CD4-positive, alpha-beta memory T cell (primary cell): ENCODE measurements at regions of chrX and their contacts with region 1.

Region 1: GRCh38 chrX:81195712-81196111 is 6.0 kb downstream of the HMGN5 start:
- DNase-seq: peak; percentile 44 to 51 (median 49)
- H3K4me3 ChIP-seq: no peak overlapping the region
- H3K4me3 Mint-ChIP-seq: no peak overlapping the region
- H3K27ac ChIP-seq: no peak overlapping the region
- H3K27ac Mint-ChIP-seq: peak overlapping the region in 1 of 7 donors; percentile 38
- H3K4me1 ChIP-seq: no peaks in the 10 kb centered on the region
- H3K4me1 Mint-ChIP-seq: peaks cover 0 to 17% (median 7%) of the 10 kb centered on the region in 4 donors
- H3K27me3 ChIP-seq: no peaks in the 10 kb centered on the region
- H3K27me3 Mint-ChIP-seq: no peaks in the 10 kb centered on the region

Region 2: DNA sequence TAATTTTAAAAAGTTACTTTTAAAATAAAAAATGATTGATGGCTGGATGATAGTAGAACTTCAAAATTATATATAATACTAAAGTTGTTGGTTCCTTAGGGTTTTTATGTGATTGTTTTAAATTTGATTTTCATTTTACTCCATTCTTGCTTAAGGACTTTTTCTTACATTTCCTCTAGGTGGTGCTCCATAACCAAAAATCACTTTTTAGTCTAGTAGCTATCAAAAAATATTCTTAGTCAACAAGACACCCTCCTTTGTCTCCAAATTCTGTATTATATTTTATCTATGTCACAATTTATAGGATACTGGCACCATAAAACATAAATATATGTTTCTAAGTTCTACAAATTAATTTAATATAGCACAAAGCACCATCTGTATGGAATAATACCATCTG is 318.8 kb before region 1 on chrX:
- CTCF ChIA-PET with region 1: no interaction called
- POLR2A ChIA-PET with region 1: no interaction called
- intact Hi-C with region 1: loop called (anchors 2 kb)
- DNase-seq: peak in 4 of 5 donors; percentile 16 to 32 (median 26)
- H3K4me3 ChIP-seq: no peak overlapping the region
- H3K4me3 Mint-ChIP-seq: no peak overlapping the region
- H3K27ac ChIP-seq: no peak overlapping the region
- H3K27ac Mint-ChIP-seq: no peak overlapping the region
- H3K4me1 ChIP-seq: no peaks in the 10 kb centered on the region
- H3K4me1 Mint-ChIP-seq: no peaks in the 10 kb centered on the region
- H3K27me3 ChIP-seq: no peaks in the 10 kb centered on the region
- H3K27me3 Mint-ChIP-seq: no peaks in the 10 kb centered on the region

Region 3: GRCh38 chrX:81377329-81377728 is 181.6 kb after region 1 on chrX:
- CTCF ChIA-PET with region 1: interaction called, 5 read pairs
- POLR2A ChIA-PET with region 1: no interaction called
- intact Hi-C with region 1: loop called (anchors 5 kb)
- DNase-seq: peak in 3 of 5 donors; percentile 1 to 8 (median 2)
- H3K4me3 ChIP-seq: no peak overlapping the region
- H3K4me3 Mint-ChIP-seq: no peak overlapping the region
- H3K27ac ChIP-seq: no peak overlapping the region
- H3K27ac Mint-ChIP-seq: no peak overlapping the region
- H3K4me1 ChIP-seq: no peaks in the 10 kb centered on the region
- H3K4me1 Mint-ChIP-seq: no peaks in the 10 kb centered on the region
- H3K27me3 ChIP-seq: no peaks in the 10 kb centered on the region
- H3K27me3 Mint-ChIP-seq: peaks cover 0 to 5% of the 10 kb centered on the region in 2 donors

Region 4: DNA sequence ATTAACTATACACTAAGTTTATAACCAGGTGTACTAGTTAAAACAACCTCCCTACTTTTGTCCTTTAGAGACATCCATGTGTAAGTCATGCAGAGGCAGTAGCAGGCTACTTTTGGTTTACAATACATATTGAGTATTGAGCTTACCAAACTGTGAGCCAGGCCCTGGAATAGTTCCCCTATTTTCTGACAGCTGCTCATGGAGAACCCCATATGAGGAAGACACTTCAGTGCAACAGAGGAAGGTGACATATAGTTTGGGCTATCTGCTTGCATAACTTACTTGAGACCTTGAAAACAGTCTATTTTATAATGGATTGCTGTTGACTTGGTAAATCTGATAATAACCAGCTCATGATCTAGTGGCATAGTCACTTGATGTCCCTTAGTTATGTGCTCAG is 196.7 kb after region 1 on chrX:
- CTCF ChIA-PET with region 1: no interaction called
- POLR2A ChIA-PET with region 1: no interaction called
- intact Hi-C with region 1: no loop called
- DNase-seq: no peak
- H3K4me3 ChIP-seq: no peak overlapping the region
- H3K4me3 Mint-ChIP-seq: no peak overlapping the region
- H3K27ac ChIP-seq: no peak overlapping the region
- H3K27ac Mint-ChIP-seq: no peak overlapping the region
- H3K4me1 ChIP-seq: no peaks in the 10 kb centered on the region
- H3K4me1 Mint-ChIP-seq: no peaks in the 10 kb centered on the region
- H3K27me3 ChIP-seq: no peaks in the 10 kb centered on the region
- H3K27me3 Mint-ChIP-seq: peaks cover 2 to 3% of the 10 kb centered on the region in 2 donors

Region 5: DNA sequence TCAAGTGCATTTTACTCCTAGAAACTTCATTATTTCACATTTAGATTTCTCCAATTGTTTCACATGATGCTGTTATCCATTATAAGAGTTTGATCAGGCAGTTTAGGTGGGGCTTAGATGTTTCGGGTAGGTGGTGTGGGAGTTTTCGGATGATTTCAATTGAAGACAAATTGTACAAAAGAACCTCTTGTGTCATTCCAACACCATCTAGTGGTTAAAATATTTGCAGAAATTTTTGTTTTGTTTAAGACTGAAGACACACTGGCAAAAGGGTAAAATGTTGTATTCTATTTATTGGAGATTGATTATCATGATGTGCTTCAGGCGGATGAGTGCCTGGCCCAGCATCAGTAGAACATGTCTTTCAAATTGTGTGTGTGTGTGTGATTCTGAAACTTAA is 218.9 kb after region 1 on chrX:
- CTCF ChIA-PET with region 1: no interaction called
- POLR2A ChIA-PET with region 1: no interaction called
- intact Hi-C with region 1: no loop called
- DNase-seq: no peak
- H3K4me3 ChIP-seq: no peak overlapping the region
- H3K4me3 Mint-ChIP-seq: no peak overlapping the region
- H3K27ac ChIP-seq: no peak overlapping the region
- H3K27ac Mint-ChIP-seq: no peak overlapping the region
- H3K4me1 ChIP-seq: no peaks in the 10 kb centered on the region
- H3K4me1 Mint-ChIP-seq: no peaks in the 10 kb centered on the region
- H3K27me3 ChIP-seq: no peaks in the 10 kb centered on the region
- H3K27me3 Mint-ChIP-seq: peaks cover 0 to 2% of the 10 kb centered on the region in 2 donors